ENCODE measurements at regions of chr3 and their contacts with region 1.

Region 1: GRCh38 chr3:159763602-159764489 is 224.8 kb upstream of the IL12A start:
- DNase-seq: peak; percentile 81
- H3K4me3 Mint-ChIP-seq: peak overlapping the region; percentile 81
- H3K27ac Mint-ChIP-seq: peak overlapping the region; percentile 90
- H3K4me1 Mint-ChIP-seq: peaks cover 40% of the 10 kb centered on the region
- H3K27me3 Mint-ChIP-seq: no peaks in the 10 kb centered on the region
- CTCF ChIP-seq: no peak

Region 2: GRCh38 chr3:159726231-159726964 is 37.4 kb before region 1 on chr3:
- CTCF ChIA-PET with region 1: interaction called, 10 read pairs
- POLR2A ChIA-PET with region 1: interaction called, 40 read pairs
- intact Hi-C with region 1: no loop called
- DNase-seq: peak; percentile 88
- H3K4me3 Mint-ChIP-seq: no peak overlapping the region
- H3K27ac Mint-ChIP-seq: peak overlapping the region; percentile 61
- H3K4me1 Mint-ChIP-seq: peaks cover 23% of the 10 kb centered on the region
- H3K27me3 Mint-ChIP-seq: no peaks in the 10 kb centered on the region
- CTCF ChIP-seq: no peak

Region 3: GRCh38 chr3:159751146-159751545 is 12.7 kb before region 1 on chr3:
- CTCF ChIA-PET with region 1: interaction called, 3 read pairs
- POLR2A ChIA-PET with region 1: interaction called, 11 read pairs
- intact Hi-C with region 1: no loop called
- DNase-seq: no peak
- H3K4me3 Mint-ChIP-seq: no peak overlapping the region
- H3K27ac Mint-ChIP-seq: peak overlapping the region; percentile 35
- H3K4me1 Mint-ChIP-seq: peaks cover 8% of the 10 kb centered on the region
- H3K27me3 Mint-ChIP-seq: no peaks in the 10 kb centered on the region
- CTCF ChIP-seq: no peak

Region 4: GRCh38 chr3:159781867-159782266 is 18.0 kb after region 1 on chr3:
- CTCF ChIA-PET with region 1: interaction called, 18 read pairs
- POLR2A ChIA-PET with region 1: interaction called, 212 read pairs
- intact Hi-C with region 1: loop called (anchors 1 kb)
- DNase-seq: no peak
- H3K4me3 Mint-ChIP-seq: no peak overlapping the region
- H3K27ac Mint-ChIP-seq: no peak overlapping the region
- H3K4me1 Mint-ChIP-seq: peaks cover 36% of the 10 kb centered on the region
- H3K27me3 Mint-ChIP-seq: no peaks in the 10 kb centered on the region
- CTCF ChIP-seq: no peak

Region 5: DNA sequence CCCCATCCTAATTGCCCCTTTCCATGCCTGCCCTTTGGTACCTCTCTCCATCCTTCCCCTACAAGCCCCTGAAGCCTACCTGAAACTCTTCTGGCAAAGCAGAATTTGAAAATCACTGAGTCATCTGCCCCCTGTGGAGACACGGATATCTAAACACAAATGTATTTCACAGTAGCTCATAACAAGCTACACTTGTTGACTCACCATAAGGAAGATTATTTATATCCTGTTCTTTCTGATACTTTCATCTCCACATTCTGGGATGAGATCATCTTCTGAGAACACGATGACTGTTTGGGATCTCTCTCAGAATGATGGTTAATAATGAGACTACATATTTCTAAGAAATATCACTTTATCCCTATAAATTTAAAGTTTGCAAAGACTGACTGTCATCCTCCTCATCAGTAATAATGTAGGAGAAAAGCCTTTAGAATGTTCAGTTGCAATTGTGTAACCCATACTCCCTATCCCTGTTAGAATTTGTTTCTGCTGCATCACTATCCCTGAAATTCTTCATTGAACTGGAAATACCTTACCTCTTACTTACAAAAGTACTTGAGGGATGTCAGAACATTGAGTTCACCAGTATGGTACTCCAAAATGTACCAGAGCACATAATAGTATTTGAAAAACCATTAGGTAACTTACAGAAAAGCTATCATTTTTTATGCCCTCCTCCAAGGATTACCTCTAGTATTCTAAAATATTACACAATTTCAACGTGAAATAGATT is 108.7 kb after region 1 on chr3:
- CTCF ChIA-PET with region 1: no interaction called
- POLR2A ChIA-PET with region 1: no interaction called
- intact Hi-C with region 1: no loop called
- DNase-seq: peak; percentile 89
- H3K4me3 Mint-ChIP-seq: no peak overlapping the region
- H3K27ac Mint-ChIP-seq: peak overlapping the region; percentile 84
- H3K4me1 Mint-ChIP-seq: peaks cover 22% of the 10 kb centered on the region
- H3K27me3 Mint-ChIP-seq: no peaks in the 10 kb centered on the region
- CTCF ChIP-seq: peak; percentile 12